AG04449 (cell line): ENCODE measurements at regions of chr6 and their contacts with region 1.

Region 1: GRCh38 chr6:30590994-30591393 is 19.8 kb downstream of the ABCF1 start:
- DNase-seq: no peak
- H3K4me3 ChIP-seq: no peak overlapping the region
- CTCF ChIP-seq: no peak

Region 2: GRCh38 chr6:30571075-30571768 is 19.8 kb before region 1 on chr6 and contains the start of gene ABCF1:
- CTCF ChIA-PET with region 1: interaction called, 14 read pairs
- POLR2A ChIA-PET with region 1: interaction called, 3 read pairs
- DNase-seq: peak; percentile 56
- H3K4me3 ChIP-seq: peak within 1 kb of the TSS; percentile 98
- CTCF ChIP-seq: no peak

Region 3: DNA sequence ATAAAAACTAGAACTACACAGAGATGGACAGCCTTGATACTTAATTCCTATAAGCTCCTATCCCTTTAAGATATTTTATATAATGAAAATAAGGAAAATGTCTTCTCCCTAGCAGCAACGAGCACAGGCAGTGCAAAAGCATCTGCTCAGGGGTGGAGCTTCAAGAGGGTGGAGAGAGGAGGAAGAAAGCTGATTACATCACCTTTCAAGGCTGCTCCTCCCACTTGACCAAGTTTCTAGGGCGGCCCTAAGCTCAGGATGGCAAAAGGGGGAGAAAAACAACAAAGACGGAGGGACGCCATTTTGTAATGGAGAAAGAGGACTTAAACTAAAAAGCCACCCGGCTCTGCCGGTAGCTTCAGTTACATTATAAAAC is 23.8 kb after region 1 on chr6:
- CTCF ChIA-PET with region 1: interaction called, 6 read pairs
- POLR2A ChIA-PET with region 1: interaction called, 20 read pairs
- DNase-seq: peak; percentile 87
- H3K4me3 ChIP-seq: peak overlapping the region; percentile 99
- CTCF ChIP-seq: no peak

Region 4: GRCh38 chr6:31094389-31094881 is 503.4 kb after region 1 on chr6:
- CTCF ChIA-PET with region 1: no interaction called
- POLR2A ChIA-PET with region 1: no interaction called
- DNase-seq: no peak
- H3K4me3 ChIP-seq: no peak overlapping the region
- CTCF ChIP-seq: no peak